GM12878 (cell line): ENCODE measurements at regions of chr4 and their contacts with region 1.

Region 1: GRCh38 chr4:16001484-16001858 is 38.5 kb upstream of the FGFBP2 start:
- DNase-seq: peak; percentile 13
- ATAC-seq: peak; percentile 98
- H3K4me3 ChIP-seq: no peak overlapping the region
- H3K27ac ChIP-seq: no peak overlapping the region
- H3K4me1 ChIP-seq: no peaks in the 10 kb centered on the region
- H3K27me3 ChIP-seq: no peaks in the 10 kb centered on the region
- CTCF ChIP-seq: peak; percentile 87 to 90 (median 87)
- EP300 ChIP-seq: no peak
- POLR2A ChIP-seq: no peak
- RAD21 ChIP-seq: peak; percentile 91

Region 2: GRCh38 chr4:15238720-15239119 is 762.8 kb before region 1 on chr4:
- CTCF ChIA-PET with region 1: no interaction called
- POLR2A ChIA-PET with region 1: no interaction called
- RAD21 ChIA-PET with region 1: no interaction called
- SMC1A ChIA-PET with region 1: no interaction called
- in situ Hi-C with region 1: no loop called
- intact Hi-C with region 1: loop called (anchors 5 kb)
- DNase-seq: no peak
- ATAC-seq: peak; percentile 83
- H3K4me3 ChIP-seq: no peak overlapping the region
- H3K27ac ChIP-seq: no peak overlapping the region
- H3K4me1 ChIP-seq: peaks cover 2% of the 10 kb centered on the region
- H3K27me3 ChIP-seq: no peaks in the 10 kb centered on the region
- CTCF ChIP-seq: peak; percentile 60 to 78 (median 60); a peak in 5 of 6 replicates
- EP300 ChIP-seq: no peak
- POLR2A ChIP-seq: no peak
- RAD21 ChIP-seq: peak; percentile 81

Region 3: DNA sequence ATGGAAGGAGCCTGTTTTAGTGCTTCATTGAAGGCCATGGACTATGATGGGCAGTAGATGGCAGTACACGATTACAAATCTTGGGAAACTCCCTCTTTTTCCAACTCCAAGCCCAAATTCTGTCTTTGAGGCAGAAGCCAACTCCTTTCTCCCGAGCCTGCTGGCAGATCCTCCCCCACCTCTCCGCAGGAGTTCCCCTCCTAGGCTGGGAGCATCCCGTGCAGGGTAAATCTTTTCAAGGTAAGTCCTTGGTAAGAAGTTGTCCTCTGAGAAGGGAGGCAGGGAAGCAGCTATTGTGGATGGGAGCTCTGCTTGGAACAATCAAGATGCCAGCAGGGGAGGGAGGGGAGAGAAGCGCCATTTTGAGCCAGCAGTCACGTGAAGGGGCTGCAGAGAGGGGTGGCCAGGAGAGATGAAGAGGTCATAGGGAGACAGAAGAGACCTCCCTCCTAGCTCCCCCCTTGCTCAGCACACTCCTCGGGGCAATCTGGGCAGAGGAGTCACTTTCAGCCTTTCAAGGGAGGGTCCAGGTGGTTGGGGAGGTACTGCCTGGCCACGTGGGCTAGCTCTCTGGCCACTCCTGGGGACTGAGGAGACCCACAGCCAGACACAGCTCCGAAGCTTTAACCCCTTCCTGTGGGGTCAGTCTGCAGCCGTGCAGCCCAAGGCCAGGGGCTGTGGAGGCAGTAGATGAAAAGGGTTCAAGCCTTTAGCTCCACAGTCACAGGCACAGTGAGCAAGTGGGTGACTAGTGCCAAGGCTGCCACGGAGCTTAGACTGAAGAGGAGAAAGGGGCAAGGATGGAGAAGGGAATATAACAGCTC is 522.2 kb before region 1 on chr4:
- CTCF ChIA-PET with region 1: interaction called, 7 read pairs
- POLR2A ChIA-PET with region 1: no interaction called
- RAD21 ChIA-PET with region 1: interaction called, 10 read pairs
- SMC1A ChIA-PET with region 1: no interaction called
- in situ Hi-C with region 1: no loop called
- intact Hi-C with region 1: loop called (anchors 5 kb)
- DNase-seq: no peak
- ATAC-seq: peak; percentile 84
- H3K4me3 ChIP-seq: no peak overlapping the region
- H3K27ac ChIP-seq: no peak overlapping the region
- H3K4me1 ChIP-seq: no peaks in the 10 kb centered on the region
- H3K27me3 ChIP-seq: no peaks in the 10 kb centered on the region
- CTCF ChIP-seq: peak; percentile 51 to 74 (median 57); a peak in 5 of 6 replicates
- EP300 ChIP-seq: no peak
- POLR2A ChIP-seq: no peak
- RAD21 ChIP-seq: peak; percentile 79

Region 4: GRCh38 chr4:15729910-15730533 is 271.4 kb before region 1 on chr4:
- CTCF ChIA-PET with region 1: interaction called, 8 read pairs
- POLR2A ChIA-PET with region 1: interaction called, 5 read pairs
- RAD21 ChIA-PET with region 1: no interaction called
- SMC1A ChIA-PET with region 1: interaction called, 6 read pairs
- in situ Hi-C with region 1: no loop called
- intact Hi-C with region 1: loop called (anchors 1 kb)
- DNase-seq: peak; percentile 2
- ATAC-seq: peak; percentile 84
- H3K4me3 ChIP-seq: no peak overlapping the region
- H3K27ac ChIP-seq: no peak overlapping the region
- H3K4me1 ChIP-seq: no peaks in the 10 kb centered on the region
- H3K27me3 ChIP-seq: no peaks in the 10 kb centered on the region; a peak in 1 of 4 replicates
- CTCF ChIP-seq: peak; percentile 69 to 77 (median 74)
- EP300 ChIP-seq: no peak
- POLR2A ChIP-seq: no peak
- RAD21 ChIP-seq: peak; percentile 92

Region 5: DNA sequence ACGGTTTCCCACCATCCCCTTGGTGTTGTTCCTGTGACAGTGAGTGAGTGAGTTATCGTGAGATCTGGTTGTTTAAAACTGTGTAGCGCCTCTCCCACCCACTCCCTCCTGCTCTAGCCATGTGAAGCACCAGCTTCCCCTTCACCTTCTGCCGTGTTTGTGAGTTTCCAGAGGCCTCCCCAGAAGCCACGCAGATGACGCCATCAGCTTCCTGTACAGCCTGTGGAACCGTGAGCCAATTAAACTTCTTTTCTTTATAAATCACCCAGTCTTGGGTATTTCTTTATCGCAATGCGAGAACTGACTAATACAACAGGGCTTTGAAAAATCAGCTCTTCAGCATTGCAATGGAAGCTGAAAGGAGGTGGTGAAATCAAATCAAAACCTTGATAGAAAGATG is 113.0 kb before region 1 on chr4:
- CTCF ChIA-PET with region 1: interaction called, 54 read pairs
- POLR2A ChIA-PET with region 1: no interaction called
- RAD21 ChIA-PET with region 1: interaction called, 17 read pairs
- SMC1A ChIA-PET with region 1: interaction called, 28 read pairs
- in situ Hi-C with region 1: loop called (anchors 5 kb)
- intact Hi-C with region 1: no loop called
- DNase-seq: no peak
- ATAC-seq: no peak
- H3K4me3 ChIP-seq: no peak overlapping the region
- H3K27ac ChIP-seq: no peak overlapping the region
- H3K4me1 ChIP-seq: peaks cover 13% of the 10 kb centered on the region; the same call in 1 of the 2 replicates
- H3K27me3 ChIP-seq: no peaks in the 10 kb centered on the region
- CTCF ChIP-seq: no peak
- EP300 ChIP-seq: no peak
- POLR2A ChIP-seq: no peak
- RAD21 ChIP-seq: no peak

Region 6: DNA sequence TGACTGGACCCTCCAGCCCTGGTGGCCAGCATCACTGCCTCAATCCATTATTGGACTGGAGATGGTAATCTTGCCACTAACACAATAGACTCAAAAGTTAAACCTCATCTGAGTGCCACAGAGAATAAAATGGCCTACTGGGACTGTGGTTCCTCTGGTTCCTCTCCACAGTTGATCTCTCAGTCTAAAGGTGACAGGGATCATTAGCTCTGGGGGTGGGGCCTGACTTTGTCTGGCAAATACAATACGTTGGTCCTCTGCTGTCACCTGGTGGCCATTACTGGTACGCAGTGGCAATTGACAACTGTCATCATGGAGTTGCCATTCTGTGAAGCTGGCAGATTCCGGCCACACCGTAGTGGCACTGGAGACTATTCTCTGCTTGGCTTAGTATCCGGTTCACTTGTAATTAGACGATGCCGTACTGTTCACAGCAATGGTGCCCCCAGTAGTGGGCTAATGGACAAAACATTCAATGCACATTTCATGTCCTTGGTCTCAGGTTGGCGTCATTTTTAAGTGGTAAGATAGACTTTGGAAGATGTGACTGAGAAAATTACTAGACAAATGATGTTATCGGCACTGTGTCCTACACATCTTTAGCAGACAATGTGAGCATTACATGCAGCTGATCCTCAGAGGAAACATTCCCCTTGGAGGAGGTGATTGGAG is 45.2 kb before region 1 on chr4:
- CTCF ChIA-PET with region 1: interaction called, 24 read pairs
- POLR2A ChIA-PET with region 1: no interaction called
- RAD21 ChIA-PET with region 1: interaction called, 10 read pairs
- SMC1A ChIA-PET with region 1: interaction called, 6 read pairs
- in situ Hi-C with region 1: no loop called
- intact Hi-C with region 1: loop called (anchors 2 kb)
- DNase-seq: peak; percentile 55
- ATAC-seq: peak; percentile 90
- H3K4me3 ChIP-seq: no peak overlapping the region
- H3K27ac ChIP-seq: no peak overlapping the region
- H3K4me1 ChIP-seq: 0 out of 2 replicates have a peak, but pooled peaks cover 3% of the 10 kb centered on the region
- H3K27me3 ChIP-seq: no peaks in the 10 kb centered on the region
- CTCF ChIP-seq: peak; percentile 86 to 98 (median 92)
- EP300 ChIP-seq: no peak
- POLR2A ChIP-seq: no peak
- RAD21 ChIP-seq: peak; percentile 95

Region 7: GRCh38 chr4:15963001-15963451 is 38.4 kb before region 1 on chr4 and contains the start of gene FGFBP2:
- CTCF ChIA-PET with region 1: interaction called, 24 read pairs
- POLR2A ChIA-PET with region 1: interaction called, 3 read pairs
- RAD21 ChIA-PET with region 1: interaction called, 3 read pairs
- SMC1A ChIA-PET with region 1: interaction called, 5 read pairs
- in situ Hi-C with region 1: no loop called
- intact Hi-C with region 1: loop called (anchors 1 kb)
- DNase-seq: no peak
- ATAC-seq: peak; percentile 89
- H3K4me3 ChIP-seq: no peak within 1 kb of the TSS
- H3K27ac ChIP-seq: no peak within 1 kb of the TSS
- H3K4me1 ChIP-seq: peaks cover 5% of the 10 kb centered on the region; the same call in 1 of the 2 replicates
- H3K27me3 ChIP-seq: no peaks in the 10 kb centered on the region
- CTCF ChIP-seq: peak; percentile 36 to 47 (median 44); a peak in 5 of 6 replicates
- EP300 ChIP-seq: no peak
- POLR2A ChIP-seq: no peak
- RAD21 ChIP-seq: no peak
- polyA plus RNA-seq, gene FGFBP2: not detected

Region 8: DNA sequence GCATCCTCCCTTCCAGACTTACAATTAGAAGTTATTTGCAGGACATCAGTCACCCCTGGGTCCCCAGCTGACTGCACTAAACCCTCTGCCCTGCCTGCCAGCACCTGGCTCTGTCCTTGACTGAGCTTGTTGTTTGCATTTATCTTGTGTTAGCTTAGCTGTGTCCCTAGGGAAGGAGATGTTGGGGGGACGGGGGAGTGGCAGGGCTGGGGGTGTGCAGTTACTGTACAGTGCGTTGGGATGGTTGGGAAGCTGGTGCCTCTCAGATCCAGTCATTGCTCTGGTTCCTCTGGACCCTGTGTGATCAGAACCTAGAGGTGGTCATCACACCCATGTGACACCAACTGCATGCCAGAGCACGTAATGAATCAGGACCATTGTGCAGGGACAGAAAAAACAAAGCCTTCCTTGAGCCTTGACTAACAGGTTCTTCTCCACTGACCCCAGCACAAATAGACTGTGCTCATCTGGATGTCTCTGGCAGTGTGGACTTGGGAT is 115.1 kb after region 1 on chr4:
- CTCF ChIA-PET with region 1: no interaction called
- POLR2A ChIA-PET with region 1: no interaction called
- RAD21 ChIA-PET with region 1: no interaction called
- SMC1A ChIA-PET with region 1: no interaction called
- in situ Hi-C with region 1: no loop called
- intact Hi-C with region 1: no loop called
- DNase-seq: no peak
- ATAC-seq: no peak
- H3K4me3 ChIP-seq: no peak overlapping the region
- H3K27ac ChIP-seq: no peak overlapping the region
- H3K4me1 ChIP-seq: no peaks in the 10 kb centered on the region
- H3K27me3 ChIP-seq: no peaks in the 10 kb centered on the region
- CTCF ChIP-seq: no peak
- EP300 ChIP-seq: no peak
- POLR2A ChIP-seq: no peak
- RAD21 ChIP-seq: no peak